Posterior cingulate gyrus (tissue), 11 donors: ENCODE measurements at regions of chr11 and their contacts with region 1.

Region 1: GRCh38 chr11:131910523-131911387 is 540.3 kb downstream of the NTM start:
- DNase-seq: peak in 7 of 10 donors; percentile 38 to 92 (median 53)

Region 2: DNA sequence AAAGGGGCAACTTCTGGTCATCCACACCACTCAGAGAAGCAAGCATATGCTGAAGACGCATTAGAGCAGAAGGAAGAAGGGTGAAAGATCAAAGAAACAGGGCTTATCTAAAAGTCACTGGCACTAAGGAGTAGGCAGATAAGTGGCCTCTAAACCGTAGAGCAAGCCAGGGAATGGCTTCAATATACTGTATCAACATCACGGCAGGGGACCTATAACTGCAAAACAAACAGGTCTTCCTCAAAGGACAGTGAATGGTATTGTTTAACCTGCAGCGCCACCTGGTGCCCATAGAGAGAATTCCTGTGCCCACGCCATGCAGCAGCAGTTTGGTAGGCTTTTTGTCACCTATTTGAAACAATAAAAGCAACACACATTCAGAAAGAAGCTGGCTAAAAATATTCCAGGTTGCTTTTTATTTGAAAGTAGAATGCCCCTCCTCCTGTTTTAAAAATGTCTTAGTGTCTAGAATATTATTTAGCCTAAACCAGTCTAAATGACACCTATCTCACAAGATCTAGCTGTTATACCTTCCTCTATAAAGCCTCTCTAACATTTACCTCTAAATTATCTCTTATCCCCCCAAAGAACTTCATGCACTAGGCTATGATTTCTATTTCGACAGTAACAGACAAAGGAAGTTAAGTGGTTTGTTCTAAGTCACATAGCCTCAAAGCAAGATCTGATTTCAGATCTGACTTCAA is 1016.3 kb before region 1 on chr11:
- intact Hi-C with region 1: no loop called
- DNase-seq: peak; percentile 51 to 96 (median 82)

Region 3: DNA sequence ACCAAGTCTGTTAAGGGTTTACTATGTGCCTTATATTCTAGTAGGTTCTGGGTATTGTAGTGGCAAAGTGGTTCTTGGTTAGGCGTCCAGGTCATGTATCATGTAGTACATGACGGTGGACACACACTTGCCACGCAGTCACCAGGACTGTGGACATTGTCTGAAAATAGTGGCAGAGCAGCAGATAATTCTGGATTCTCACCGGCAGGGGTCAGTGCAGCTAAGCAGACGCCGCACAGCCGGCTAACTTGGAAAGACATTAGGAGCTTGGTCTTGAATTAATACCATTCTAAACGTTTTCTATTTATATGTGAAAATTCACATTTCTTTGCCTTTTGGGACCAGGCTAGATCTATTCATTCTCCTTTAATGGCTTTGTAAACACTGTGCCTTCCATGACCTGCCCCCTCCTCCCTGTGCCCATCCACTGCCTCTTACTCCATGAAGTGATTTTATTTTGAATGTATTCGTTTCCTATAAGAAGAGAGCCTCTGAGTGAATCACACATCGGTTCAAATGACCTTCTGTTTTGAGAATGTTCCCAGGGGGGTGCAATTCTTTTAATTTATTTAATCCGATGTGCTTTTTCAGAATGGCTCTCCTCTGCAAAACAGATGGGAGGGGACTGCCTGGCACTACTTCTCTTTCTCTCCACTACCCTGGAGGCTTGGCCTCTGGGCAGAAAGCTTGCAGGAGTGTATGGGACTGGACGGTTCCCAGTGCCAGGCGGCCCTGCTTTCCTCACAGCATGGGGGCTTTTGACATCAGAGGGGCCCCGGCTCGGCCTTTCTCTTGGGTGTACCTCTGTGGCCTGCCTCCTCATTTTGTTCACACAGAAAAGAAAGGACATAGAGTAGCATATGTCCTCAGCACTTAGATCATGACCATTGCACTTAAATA is 162.4 kb before region 1 on chr11:
- intact Hi-C with region 1: loop called (anchors 5 kb)
- DNase-seq: peak; percentile 55 to 97 (median 78)

Region 4: GRCh38 chr11:131815590-131815989 is 95.2 kb before region 1 on chr11:
- intact Hi-C with region 1: no loop called
- DNase-seq: no peak

Region 5: GRCh38 chr11:131867457-131868257 is 43.1 kb before region 1 on chr11:
- intact Hi-C with region 1: loop called (anchors 2 kb)
- DNase-seq: peak; percentile 63 to 98 (median 82)

Region 6: DNA sequence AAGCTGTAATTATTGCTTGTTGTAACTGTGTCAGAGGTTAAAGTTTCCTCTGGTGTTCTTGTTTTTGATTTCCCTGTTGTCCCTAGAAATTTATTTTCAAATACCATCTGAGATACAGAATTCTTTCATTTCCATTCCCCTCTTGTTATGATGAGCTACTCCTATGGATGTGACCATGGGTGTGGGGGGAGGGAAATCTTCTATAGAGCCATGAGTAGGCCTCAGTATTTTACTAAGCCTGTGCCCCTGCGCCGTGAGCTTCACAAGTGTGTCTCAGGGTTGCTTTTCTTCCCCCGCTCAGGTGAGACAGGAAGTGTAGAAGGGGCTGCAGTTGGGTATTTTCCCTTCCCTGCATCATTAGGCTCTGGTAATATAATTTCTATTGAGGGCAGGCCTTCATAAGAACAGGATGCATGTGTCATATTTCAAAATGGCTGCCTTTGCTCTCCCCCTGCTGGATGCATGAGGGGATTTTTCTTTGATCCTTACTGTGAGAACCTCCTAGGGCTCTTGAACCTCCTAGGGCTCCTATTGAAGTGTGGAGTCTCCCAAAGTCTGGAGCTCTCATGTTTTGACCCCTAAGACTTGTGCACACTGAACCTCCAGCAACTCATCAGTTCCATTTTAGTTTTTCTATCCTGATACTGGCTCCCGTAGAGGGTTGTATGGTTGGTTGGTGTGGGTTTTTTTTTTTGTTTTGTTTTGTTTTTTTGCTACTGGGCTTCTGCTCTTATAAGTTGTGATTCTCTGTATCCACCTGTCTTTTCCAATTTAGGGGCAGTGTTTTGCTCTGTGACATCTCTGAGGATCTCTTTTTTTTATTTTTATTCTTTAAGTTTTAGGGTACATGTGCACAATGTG is 117.9 kb after region 1 on chr11:
- intact Hi-C with region 1: loop called (anchors 2 kb)
- DNase-seq: peak in 3 of 10 donors; percentile 40 to 48 (median 44)

Region 7: DNA sequence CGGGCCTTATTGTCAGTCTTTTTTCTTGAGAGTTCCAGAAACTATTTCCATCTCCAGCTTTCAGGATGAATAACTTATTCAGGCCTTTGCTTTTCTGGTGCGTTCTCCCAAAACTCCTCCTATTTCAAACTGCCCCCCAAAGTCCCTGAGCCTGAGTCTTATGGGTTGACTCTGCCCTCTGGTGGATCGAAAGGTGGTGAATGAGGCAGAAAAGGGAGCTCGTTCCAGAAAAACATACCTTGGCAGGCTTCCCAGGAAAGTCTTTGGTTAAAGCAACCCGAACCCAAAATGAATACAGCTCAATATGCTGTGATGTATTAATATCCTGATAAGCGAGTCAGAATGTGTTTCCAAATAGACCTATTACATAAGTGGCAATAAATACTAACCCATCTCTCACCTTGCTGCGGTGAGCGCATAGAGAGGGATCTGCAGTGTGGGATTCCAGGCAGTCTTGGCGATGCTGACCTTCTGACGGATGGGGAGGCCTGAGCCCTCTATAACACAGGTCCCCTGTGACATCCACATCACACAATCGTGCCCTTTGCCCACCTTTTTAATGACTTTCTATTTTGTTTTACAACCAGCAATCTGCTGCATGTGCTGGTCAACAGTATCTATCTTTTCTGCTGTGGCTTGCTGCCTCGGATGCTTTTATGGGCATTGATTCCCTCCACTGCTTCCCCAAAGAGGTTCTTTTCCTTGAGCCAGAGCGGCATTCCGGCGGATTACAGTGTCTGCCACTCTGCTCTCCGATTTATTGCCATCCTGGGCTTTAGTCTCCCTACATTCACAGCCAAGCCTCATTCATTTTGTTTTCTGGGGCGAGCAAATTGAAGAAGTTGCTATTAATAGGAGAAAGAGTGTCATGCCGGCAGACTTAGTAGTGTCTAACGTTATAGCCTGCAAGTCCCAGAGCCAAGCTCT is 216.5 kb after region 1 on chr11:
- intact Hi-C with region 1: loop called (anchors 5 kb)
- DNase-seq: peak in 6 of 10 donors; percentile 35 to 85 (median 62)